H1 (cell line): ENCODE measurements at regions of chr5 and their contacts with region 1.

Region 1: GRCh38 chr5:31809050-31809870 is 170.3 kb downstream of the PDZD2 start:
- DNase-seq: peak; percentile 49 to 75
- H3K4me3 ChIP-seq: no peak overlapping the region
- H3K27ac ChIP-seq: no peak overlapping the region
- H3K4me1 ChIP-seq: no peaks in the 10 kb centered on the region
- H3K27me3 ChIP-seq: no peaks in the 10 kb centered on the region
- CTCF ChIP-seq: peak; percentile 71 to 97 (median 85)
- EP300 ChIP-seq: no peak
- POLR2A ChIP-seq: no peak
- RAD21 ChIP-seq: peak; percentile 97

Region 2: GRCh38 chr5:31573494-31574142 is 235.6 kb before region 1 on chr5:
- CTCF ChIA-PET with region 1: interaction called, 10 read pairs
- POLR2A ChIA-PET with region 1: no interaction called
- DNase-seq: no peak
- H3K4me3 ChIP-seq: no peak overlapping the region
- H3K27ac ChIP-seq: no peak overlapping the region
- H3K4me1 ChIP-seq: no peaks in the 10 kb centered on the region
- H3K27me3 ChIP-seq: peaks cover 0 to 1% (median 0%) of the 10 kb centered on the region in 4 experiments; a peak in 1 of 7 replicates
- CTCF ChIP-seq: no peak
- EP300 ChIP-seq: no peak
- POLR2A ChIP-seq: no peak
- RAD21 ChIP-seq: no peak

Region 3: DNA sequence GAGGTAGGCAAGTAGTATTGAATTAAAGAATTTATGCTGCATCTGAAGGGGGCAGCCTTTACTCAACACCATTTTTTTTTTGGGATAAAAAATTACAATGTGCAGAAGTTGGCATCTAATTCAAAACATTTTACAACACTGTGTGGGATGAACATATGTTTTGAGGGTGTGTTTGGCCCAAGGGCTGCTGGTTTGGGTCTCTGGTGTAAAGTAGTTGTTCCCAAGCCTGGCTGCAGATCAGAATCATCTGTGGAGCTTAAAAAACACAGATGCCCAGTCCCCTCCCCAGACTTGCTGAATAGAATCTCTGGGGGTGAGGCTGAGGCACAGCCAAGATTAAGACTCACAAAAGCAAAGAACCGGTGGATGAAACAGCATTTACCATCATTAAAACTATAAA is 203.3 kb before region 1 on chr5:
- CTCF ChIA-PET with region 1: interaction called, 13 read pairs
- POLR2A ChIA-PET with region 1: no interaction called
- DNase-seq: no peak
- H3K4me3 ChIP-seq: no peak overlapping the region
- H3K27ac ChIP-seq: no peak overlapping the region
- H3K4me1 ChIP-seq: no peaks in the 10 kb centered on the region
- H3K27me3 ChIP-seq: no peaks in the 10 kb centered on the region
- CTCF ChIP-seq: no peak
- EP300 ChIP-seq: no peak
- POLR2A ChIP-seq: no peak
- RAD21 ChIP-seq: no peak

Region 4: DNA sequence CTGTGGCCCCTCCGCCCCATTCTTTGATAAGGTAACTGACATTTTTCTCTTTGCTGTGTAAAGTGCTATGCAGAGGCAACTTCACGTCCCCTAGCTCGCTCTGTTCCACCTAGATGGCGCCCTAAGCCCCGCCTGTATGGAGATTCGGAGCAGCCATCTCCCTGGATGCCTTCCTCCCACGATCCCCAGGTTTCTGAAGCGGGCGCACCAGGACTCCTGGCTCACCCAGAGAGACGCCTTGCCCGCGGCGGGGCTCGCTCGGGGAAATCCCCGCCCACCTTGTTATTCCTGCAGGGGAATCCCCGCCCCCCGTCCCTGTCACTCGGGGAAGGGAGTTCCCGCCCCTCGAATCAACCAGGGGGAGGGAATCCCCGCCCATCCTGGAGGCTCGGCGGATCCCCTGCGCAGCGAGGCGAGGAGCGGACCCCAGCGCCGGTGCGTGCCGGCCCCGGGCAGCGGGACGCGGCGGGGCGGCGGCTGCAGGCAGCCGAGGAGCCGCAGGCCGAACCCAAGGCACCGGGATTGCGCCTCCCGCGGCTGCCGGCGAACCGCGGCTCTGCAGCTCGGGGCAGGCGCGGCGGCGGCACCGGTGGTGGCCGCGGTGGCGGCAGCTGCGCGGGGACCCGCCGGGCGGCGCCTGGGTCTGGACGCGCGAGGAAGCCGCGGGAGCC is 170.4 kb before region 1 on chr5 and contains the start of gene PDZD2:
- CTCF ChIA-PET with region 1: interaction called, 14 read pairs
- POLR2A ChIA-PET with region 1: no interaction called
- DNase-seq: peak; percentile 39 to 86
- H3K4me3 ChIP-seq: peak within 1 kb of the TSS; percentile 53 to 82 (median 65)
- H3K27ac ChIP-seq: no peak within 1 kb of the TSS
- H3K4me1 ChIP-seq: peaks cover 0 to 14% (median 5%) of the 10 kb centered on the region in 4 experiments; a peak in 4 of 7 replicates
- H3K27me3 ChIP-seq: peaks cover 2 to 22% (median 15%) of the 10 kb centered on the region in 4 experiments; a peak in 6 of 7 replicates
- CTCF ChIP-seq: peak; percentile 41 to 58 (median 53); a peak in 3 of 4 replicates
- EP300 ChIP-seq: no peak
- POLR2A ChIP-seq: no peak
- RAD21 ChIP-seq: peak in 1 of 2 experiments; percentile 51; a peak in 2 of 4 replicates
- total RNA-seq, gene PDZD2: 6.8 and 8.5 TPM in 2 replicates

Region 5: DNA sequence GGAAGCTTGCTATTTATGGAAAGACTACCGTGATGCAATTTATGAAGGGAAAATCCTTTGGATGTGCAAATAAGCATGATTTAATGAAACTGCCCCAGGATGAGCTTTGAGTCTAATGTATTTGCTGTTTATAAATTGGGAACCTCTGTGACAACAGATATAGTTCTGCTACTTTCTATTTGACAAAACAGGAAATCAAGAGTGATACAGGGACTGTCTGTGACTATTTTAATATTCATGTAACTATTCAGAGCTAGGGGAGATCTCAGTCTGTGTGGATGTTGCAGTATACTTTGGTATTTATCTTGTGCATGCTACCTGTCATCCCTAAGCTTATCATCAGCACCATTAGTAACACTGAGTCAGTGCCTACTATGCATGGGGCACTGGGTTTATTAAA is 38.3 kb before region 1 on chr5:
- CTCF ChIA-PET with region 1: interaction called, 24 read pairs
- POLR2A ChIA-PET with region 1: no interaction called
- DNase-seq: no peak
- H3K4me3 ChIP-seq: no peak overlapping the region
- H3K27ac ChIP-seq: no peak overlapping the region
- H3K4me1 ChIP-seq: peaks cover 3 to 9% (median 5%) of the 10 kb centered on the region in 4 experiments; a peak in 4 of 7 replicates
- H3K27me3 ChIP-seq: no peaks in the 10 kb centered on the region
- CTCF ChIP-seq: no peak
- EP300 ChIP-seq: no peak
- POLR2A ChIP-seq: no peak
- RAD21 ChIP-seq: no peak

Region 6: GRCh38 chr5:31825518-31826068 is 16.3 kb after region 1 on chr5:
- CTCF ChIA-PET with region 1: interaction called, 27 read pairs
- POLR2A ChIA-PET with region 1: no interaction called
- DNase-seq: peak in 1 of 2 experiments; percentile 63
- H3K4me3 ChIP-seq: no peak overlapping the region
- H3K27ac ChIP-seq: no peak overlapping the region
- H3K4me1 ChIP-seq: no peaks in the 10 kb centered on the region
- H3K27me3 ChIP-seq: no peaks in the 10 kb centered on the region
- CTCF ChIP-seq: peak in 2 of 3 experiments; percentile 68 to 75; a peak in 3 of 4 replicates
- EP300 ChIP-seq: no peak
- POLR2A ChIP-seq: no peak
- RAD21 ChIP-seq: peak; percentile 82 to 90

Region 7: GRCh38 chr5:31954091-31954490 is 144.8 kb after region 1 on chr5:
- CTCF ChIA-PET with region 1: no interaction called
- POLR2A ChIA-PET with region 1: no interaction called
- DNase-seq: no peak
- H3K4me3 ChIP-seq: no peak overlapping the region
- H3K27ac ChIP-seq: no peak overlapping the region
- H3K4me1 ChIP-seq: no peaks in the 10 kb centered on the region
- H3K27me3 ChIP-seq: no peaks in the 10 kb centered on the region
- CTCF ChIP-seq: no peak
- EP300 ChIP-seq: no peak
- POLR2A ChIP-seq: no peak
- RAD21 ChIP-seq: no peak